Colonic mucosa (tissue), 4 donors: ENCODE measurements at regions of chr2 and their contacts with region 1.

Region 1: DNA sequence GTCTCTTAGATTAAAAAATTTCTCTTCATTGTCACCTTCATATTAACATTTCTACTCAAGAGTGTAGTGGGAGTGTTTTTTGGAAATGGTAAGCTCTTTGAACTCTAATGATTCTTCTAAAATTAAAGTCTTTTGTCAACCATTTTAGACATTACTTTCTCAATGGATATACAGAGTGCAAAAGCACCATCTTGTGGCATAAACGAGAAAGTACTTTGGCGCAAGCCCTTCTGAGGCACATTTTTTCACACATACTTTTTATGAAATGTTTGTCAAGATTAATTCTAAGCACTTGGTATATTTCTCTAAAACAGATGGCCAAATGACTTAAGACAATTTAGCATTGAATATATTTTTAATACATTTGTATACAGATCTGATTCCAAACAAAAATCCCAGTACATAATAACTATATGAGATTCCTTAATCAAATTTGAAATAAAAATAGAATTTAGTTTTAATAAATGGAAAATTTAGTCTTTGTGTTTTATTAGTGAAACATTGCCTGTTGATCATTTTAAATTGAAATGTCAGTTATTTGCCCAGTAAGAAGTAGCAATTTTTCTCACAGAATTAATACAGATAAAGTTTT is 63.3 kb upstream of the GALNT5 start:
- DNase-seq: no peak
- H3K4me3 ChIP-seq: no peak overlapping the region
- H3K27ac ChIP-seq: no peak overlapping the region
- H3K4me1 ChIP-seq: no peaks in the 10 kb centered on the region
- H3K27me3 ChIP-seq: no peaks in the 10 kb centered on the region
- CTCF ChIP-seq: peak; percentile 71

Region 2: DNA sequence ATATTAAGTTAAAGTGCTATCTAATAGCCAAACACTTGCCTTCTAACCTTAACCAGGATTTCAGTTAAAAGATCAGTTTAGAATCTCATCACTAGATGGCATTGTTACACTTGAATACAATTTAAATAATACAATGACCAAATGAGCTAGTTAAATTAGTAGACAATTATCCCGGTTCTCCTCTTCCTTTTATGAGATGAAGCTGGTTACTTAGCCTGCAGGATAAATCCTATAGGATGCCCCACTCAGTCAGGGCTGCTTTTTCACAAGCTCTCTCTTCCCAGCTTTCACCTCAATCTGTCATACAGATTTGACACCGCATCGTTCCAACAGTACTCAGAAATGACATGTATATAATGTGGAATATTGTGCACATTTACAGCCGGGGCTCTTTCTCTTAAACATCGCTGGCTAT is 1816.9 kb before region 1 on chr2:
- intact Hi-C with region 1: loop called (anchors 10 kb)
- DNase-seq: no peak
- H3K4me3 ChIP-seq: no peak overlapping the region
- H3K27ac ChIP-seq: no peak overlapping the region
- H3K4me1 ChIP-seq: no peaks in the 10 kb centered on the region
- H3K27me3 ChIP-seq: no peaks in the 10 kb centered on the region
- CTCF ChIP-seq: peak; percentile 19

Region 3: DNA sequence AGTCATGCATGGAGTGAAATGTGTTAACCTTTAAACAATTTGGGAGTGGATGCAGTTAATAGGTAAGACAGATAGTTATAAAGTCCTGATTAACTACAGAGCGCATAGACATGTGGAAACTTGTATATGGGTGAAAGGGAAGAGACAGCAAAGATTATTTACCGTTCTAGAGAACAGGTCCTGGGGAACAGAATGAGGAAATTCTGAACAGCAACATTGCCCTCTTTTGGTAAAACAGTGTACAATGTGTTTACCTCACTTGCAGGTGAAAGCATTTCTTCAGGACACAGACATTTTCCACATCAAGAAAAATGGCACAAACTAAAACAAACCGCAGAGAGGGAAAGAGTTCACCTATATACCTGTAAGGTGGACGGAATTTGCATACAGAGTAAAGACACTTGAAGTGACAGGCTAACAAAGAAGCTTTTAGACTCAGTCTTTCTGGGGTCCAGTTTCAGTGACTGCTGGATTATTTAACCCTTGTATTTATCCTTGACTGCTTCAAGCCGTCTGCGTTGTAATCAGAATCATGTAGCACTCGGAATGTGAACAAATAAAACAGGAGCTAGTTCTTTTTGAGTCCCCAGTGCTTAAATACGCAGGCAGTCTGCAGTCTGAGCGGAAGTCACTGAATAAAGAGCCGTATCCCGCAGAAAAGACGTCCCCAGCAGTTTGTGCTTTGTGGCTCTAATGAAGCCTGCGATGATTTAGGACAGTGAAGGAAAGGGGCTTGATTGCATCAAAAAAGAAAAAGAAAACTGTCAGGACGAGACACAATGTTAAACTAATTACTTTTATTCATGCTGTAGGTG is 301.5 kb before region 1 on chr2:
- intact Hi-C with region 1: loop called (anchors 5 kb)
- DNase-seq: no peak
- H3K4me3 ChIP-seq: peak overlapping the region; percentile 30
- H3K27ac ChIP-seq: no peak overlapping the region
- H3K4me1 ChIP-seq: no peaks in the 10 kb centered on the region
- H3K27me3 ChIP-seq: no peaks in the 10 kb centered on the region
- CTCF ChIP-seq: peak; percentile 36

Region 4: DNA sequence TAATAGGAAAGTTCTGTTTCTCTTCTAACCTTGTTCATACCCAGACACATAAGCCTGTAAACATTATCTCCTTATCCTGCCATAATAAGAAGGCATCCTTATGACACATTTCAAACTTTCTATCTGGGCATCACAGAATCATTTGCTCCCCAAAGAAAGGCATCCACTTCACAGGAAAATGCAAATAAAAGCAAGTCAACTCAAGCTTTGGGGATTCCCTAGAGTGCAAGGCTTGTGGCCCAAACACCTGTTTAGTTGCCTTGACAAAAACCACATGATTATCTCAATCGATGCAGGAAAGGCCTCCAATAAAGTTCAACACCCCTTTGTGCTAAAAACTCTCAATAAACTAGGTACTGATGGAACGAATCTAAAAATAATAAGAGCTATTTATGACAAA is 132.4 kb before region 1 on chr2:
- intact Hi-C with region 1: loop called (anchors 5 kb)
- DNase-seq: no peak
- H3K4me3 ChIP-seq: no peak overlapping the region
- H3K27ac ChIP-seq: no peak overlapping the region
- H3K4me1 ChIP-seq: no peaks in the 10 kb centered on the region
- H3K27me3 ChIP-seq: no peaks in the 10 kb centered on the region
- CTCF ChIP-seq: no peak

Region 5: DNA sequence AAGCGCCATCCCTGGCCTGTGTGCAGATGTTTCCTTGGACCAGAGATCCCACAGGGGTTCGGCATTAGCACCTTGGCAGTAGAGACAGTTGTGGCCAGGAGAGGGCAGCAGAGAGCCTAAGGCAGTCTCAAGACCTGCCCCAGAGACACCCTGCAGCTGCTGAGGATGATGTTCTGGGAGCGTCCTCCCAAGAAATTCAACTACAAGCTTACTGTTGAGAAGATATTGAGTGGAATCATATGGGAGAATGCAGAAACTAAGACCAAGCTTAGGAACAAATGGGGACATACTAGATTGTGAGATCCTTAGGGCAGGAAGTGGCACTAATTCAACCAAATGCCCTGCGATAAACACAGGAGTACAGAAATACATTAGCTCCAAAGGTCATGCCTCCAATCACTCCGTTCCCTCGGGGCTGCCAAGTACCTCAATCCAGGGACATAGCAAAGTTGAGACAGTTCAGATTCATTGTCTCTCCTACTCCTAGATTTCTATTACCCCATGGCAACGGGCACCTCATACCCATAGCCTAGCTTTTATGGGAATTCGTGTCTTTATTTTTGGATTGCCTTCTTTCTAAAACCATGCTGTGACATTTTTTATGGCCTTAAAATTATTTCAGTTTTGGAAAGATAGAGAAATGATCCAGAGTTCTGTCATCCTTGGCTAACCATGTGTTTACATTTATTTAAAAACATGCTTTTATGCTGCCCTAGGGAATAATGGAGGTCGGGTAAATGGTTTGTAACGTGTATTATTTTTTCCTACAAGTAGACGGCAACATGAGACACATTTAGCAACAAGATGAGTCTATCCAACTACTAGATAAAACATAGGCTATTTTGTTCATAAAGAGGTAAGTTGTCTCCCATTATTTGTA is 133.7 kb after region 1 on chr2:
- intact Hi-C with region 1: no loop called
- DNase-seq: peak; percentile 85
- H3K4me3 ChIP-seq: no peak overlapping the region
- H3K27ac ChIP-seq: no peak overlapping the region
- H3K4me1 ChIP-seq: no peaks in the 10 kb centered on the region
- H3K27me3 ChIP-seq: no peaks in the 10 kb centered on the region
- CTCF ChIP-seq: peak; percentile 93

Region 6: DNA sequence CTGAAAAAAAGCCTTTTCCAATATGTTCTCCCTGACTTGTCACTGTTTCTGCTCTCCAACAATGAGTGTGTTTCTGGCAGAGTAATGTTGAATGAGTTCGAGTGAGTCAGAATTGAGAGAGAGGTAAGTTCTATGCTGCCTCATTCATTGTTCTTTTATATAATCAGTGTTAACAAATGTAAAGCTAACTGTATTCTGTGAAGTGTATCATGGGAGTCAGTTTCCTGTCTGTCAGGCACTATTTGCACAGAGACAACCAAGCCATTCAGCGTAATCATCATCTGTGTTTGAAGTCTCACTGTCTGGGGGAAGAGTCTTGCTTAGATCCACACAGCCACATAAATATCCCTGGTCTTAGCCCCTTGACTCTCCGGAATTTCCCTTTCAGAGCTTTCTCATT is 885.5 kb after region 1 on chr2:
- intact Hi-C with region 1: no loop called
- DNase-seq: no peak
- H3K4me3 ChIP-seq: no peak overlapping the region
- H3K27ac ChIP-seq: no peak overlapping the region
- H3K4me1 ChIP-seq: no peaks in the 10 kb centered on the region
- H3K27me3 ChIP-seq: no peaks in the 10 kb centered on the region
- CTCF ChIP-seq: no peak